ENCODE measurements at regions of chr16 and their contacts with region 1.

Region 1: GRCh38 chr16:88743693-88744576 is 37.6 kb downstream of the CTU2 start:
- DNase-seq: peak; percentile 91
- ATAC-seq: peak; percentile 60

Region 2: GRCh38 chr16:87877938-87878507 is 865.9 kb before region 1 on chr16:
- intact Hi-C with region 1: no loop called
- DNase-seq: no peak
- ATAC-seq: no peak

Region 3: GRCh38 chr16:88785106-88785924 is 41.4 kb after region 1 on chr16 and contains the start of gene PIEZO1:
- intact Hi-C with region 1: loop called (anchors 2 kb)
- DNase-seq: peak; percentile 91
- ATAC-seq: peak; percentile 62
- total RNA-seq, gene PIEZO1: 18.1 TPM